HCT116 (cell line): ENCODE measurements at regions of chr15 and their contacts with region 1.

Region 1: DNA sequence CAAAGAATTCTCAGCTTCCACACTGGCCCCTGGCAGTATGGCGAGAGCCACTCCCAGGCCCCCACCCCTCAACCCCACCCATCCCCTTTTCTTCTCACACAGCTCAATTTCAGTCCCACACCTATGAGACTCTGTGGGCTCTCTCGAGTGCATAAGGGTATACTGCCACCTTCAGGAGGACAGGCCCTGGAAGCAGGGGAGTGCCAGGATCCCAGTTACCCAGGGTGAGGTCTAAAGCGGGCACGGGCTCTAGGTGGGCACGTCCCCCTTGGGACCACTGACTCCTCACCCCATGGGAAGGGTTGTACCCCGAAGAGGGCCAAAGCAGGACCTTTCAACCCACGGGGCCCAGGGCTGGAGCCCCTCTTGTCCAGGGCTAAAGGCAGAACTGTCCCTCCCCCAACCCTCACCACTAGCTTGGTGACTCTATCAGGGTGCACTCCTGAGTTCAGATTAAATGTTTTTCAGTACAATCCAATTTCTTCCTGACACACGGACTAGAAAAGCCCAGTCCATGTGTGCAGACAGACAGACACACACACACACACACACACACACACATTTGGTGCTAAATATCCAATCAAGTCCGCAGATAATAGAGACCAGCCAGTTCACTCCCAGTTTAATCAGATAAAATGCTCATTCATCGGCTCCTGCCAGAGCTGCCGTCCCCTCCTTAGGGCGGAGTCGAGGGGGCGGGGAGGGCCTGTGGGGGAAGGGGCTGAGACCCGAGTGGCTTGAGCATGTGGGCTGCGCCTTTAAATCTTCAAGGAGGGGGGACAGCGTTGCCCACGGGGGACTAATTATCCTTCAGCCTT is 59.4 kb downstream of the CYP11A1 start:
- DNase-seq: peak; percentile 49
- ATAC-seq: peak; percentile 89
- H3K4me3 ChIP-seq: no peak overlapping the region
- H3K27ac ChIP-seq: no peak overlapping the region
- H3K4me1 ChIP-seq: peaks cover 4 to 18% of the 10 kb centered on the region in 2 experiments; a peak in 3 of 4 replicates
- H3K27me3 ChIP-seq: no peaks in the 10 kb centered on the region
- CTCF ChIP-seq: peak; percentile 74 to 88 (median 80); a peak in 5 of 6 replicates
- POLR2A ChIP-seq: no peak
- RAD21 ChIP-seq: peak; percentile 87

Region 2: GRCh38 chr15:74047781-74048180 is 260.3 kb before region 1 on chr15:
- CTCF ChIA-PET with region 1: interaction called, 45 read pairs
- POLR2A ChIA-PET with region 1: no interaction called
- RAD21 ChIA-PET with region 1: interaction called in 1 of 2 experiments, 4 read pairs
- intact Hi-C with region 1: loop called (anchors 5 kb)
- DNase-seq: no peak
- ATAC-seq: no peak
- H3K4me3 ChIP-seq: no peak overlapping the region
- H3K27ac ChIP-seq: no peak overlapping the region
- H3K4me1 ChIP-seq: peaks cover 7 to 10% of the 10 kb centered on the region in 2 experiments
- H3K27me3 ChIP-seq: no peaks in the 10 kb centered on the region
- CTCF ChIP-seq: no peak
- POLR2A ChIP-seq: no peak
- RAD21 ChIP-seq: no peak

Region 3: DNA sequence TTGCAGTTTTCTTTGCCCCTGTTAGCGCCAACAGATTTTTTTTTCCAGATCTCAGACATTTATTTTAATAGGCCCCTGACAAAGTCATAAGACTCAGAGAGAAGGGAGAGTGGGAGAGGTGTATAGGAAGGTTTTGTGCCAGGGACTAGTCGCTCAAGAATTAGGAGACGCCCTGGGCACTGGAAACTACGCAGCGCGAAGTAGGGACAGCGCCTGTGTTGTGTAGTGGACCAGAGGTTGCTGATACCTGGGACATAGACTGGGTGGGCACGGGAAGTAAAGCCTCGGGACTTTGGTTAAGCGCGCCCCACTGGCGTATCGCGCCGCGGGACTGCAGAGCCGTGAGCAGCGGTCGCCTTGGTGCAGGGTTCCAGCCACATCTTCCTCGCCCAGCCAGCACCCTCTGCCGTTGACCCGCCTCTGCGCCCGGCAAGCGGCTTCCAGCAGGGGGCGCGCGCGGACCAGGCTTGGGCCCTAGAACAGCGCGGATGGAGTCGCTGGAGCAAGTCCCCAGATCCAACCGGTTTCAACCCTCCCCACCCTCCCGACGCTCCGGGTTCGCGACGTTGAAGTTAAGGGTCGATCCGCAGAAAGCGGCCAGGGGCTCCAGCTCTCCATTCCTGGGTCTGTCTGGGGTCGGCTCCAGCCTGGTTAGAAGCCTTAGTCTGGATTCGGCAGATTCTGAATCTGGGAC is 180.6 kb before region 1 on chr15:
- CTCF ChIA-PET with region 1: interaction called, 21 read pairs
- POLR2A ChIA-PET with region 1: interaction called, 4 read pairs
- RAD21 ChIA-PET with region 1: interaction called, 3 to 4 read pairs
- intact Hi-C with region 1: loop called (anchors 1 kb)
- DNase-seq: peak; percentile 69
- ATAC-seq: peak; percentile 100
- H3K4me3 ChIP-seq: peak overlapping the region; percentile 32 to 33
- H3K27ac ChIP-seq: no peak overlapping the region
- H3K4me1 ChIP-seq: peaks cover 0 to 9% of the 10 kb centered on the region in 2 experiments; a peak in 2 of 4 replicates
- H3K27me3 ChIP-seq: no peaks in the 10 kb centered on the region
- CTCF ChIP-seq: peak; percentile 83 to 99 (median 98)
- POLR2A ChIP-seq: no peak
- RAD21 ChIP-seq: peak; percentile 100

Region 4: GRCh38 chr15:74240002-74240568 is 68.0 kb before region 1 on chr15:
- CTCF ChIA-PET with region 1: interaction called, 18 read pairs
- POLR2A ChIA-PET with region 1: no interaction called
- RAD21 ChIA-PET with region 1: interaction called in 1 of 2 experiments, 3 read pairs
- intact Hi-C with region 1: no loop called
- DNase-seq: peak; percentile 88
- ATAC-seq: peak; percentile 96
- H3K4me3 ChIP-seq: 0 out of 4 replicates have a peak overlapping the region, but pooled peaks of 1 of the 2 experiments have one; percentile 9
- H3K27ac ChIP-seq: peak overlapping the region; percentile 64
- H3K4me1 ChIP-seq: peaks cover 38 to 46% of the 10 kb centered on the region in 2 experiments
- H3K27me3 ChIP-seq: no peaks in the 10 kb centered on the region
- CTCF ChIP-seq: peak; percentile 34 to 76 (median 63); a peak in 5 of 6 replicates
- POLR2A ChIP-seq: no peak
- RAD21 ChIP-seq: peak; percentile 52; the same call in 1 of the 2 replicates

Region 5: GRCh38 chr15:74322181-74323076 is 14.4 kb after region 1 on chr15:
- CTCF ChIA-PET with region 1: interaction called, 126 read pairs
- POLR2A ChIA-PET with region 1: interaction called, 4 read pairs
- RAD21 ChIA-PET with region 1: interaction called, 4 to 8 read pairs
- intact Hi-C with region 1: no loop called
- DNase-seq: peak; percentile 29
- ATAC-seq: peak; percentile 93
- H3K4me3 ChIP-seq: no peak overlapping the region
- H3K27ac ChIP-seq: no peak overlapping the region
- H3K4me1 ChIP-seq: no peaks in the 10 kb centered on the region; a peak in 2 of 4 replicates
- H3K27me3 ChIP-seq: no peaks in the 10 kb centered on the region
- CTCF ChIP-seq: peak; percentile 90 to 93 (median 93)
- POLR2A ChIP-seq: no peak
- RAD21 ChIP-seq: peak; percentile 94